ENCODE measurements at regions of chr6 and their contacts with region 1.

Region 1: GRCh38 chr6:166106076-166106686 is 61.5 kb downstream of the TBXT start:
- DNase-seq: peak; percentile 86
- H3K4me3 Mint-ChIP-seq: no peak overlapping the region
- H3K27ac Mint-ChIP-seq: no peak overlapping the region
- H3K4me1 Mint-ChIP-seq: peaks cover 2% of the 10 kb centered on the region
- H3K27me3 Mint-ChIP-seq: peaks cover 9% of the 10 kb centered on the region

Region 2: DNA sequence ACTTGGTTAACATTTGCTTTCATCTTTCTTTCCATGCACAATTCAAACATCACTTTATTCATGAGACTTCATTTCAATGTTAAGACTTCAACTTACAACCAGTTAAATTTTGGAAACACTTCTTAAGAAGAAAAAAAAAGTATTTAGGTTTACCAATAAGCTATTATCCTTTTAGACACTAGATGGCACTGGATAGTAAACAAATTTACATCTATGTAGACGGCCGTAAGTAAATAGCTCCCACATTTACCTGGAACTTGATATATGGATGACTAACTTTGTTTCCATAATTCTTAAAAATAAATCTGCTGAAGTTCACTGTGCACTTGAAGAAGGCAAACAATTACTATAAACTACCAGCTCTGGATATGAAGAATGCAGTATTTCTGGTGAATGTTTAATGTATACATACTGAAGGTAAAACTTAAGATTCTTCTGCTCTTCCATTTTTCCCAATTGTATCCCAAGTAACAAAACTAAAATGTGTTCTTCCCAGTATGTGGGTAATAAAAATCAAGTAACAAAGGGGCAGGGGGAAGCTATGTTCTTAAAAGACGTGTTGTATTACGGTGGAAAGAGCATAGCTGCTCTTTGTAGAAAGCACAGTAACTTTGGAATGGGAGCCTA is 666.1 kb before region 1 on chr6:
- CTCF ChIA-PET with region 1: no interaction called
- intact Hi-C with region 1: loop called (anchors 10 kb)
- DNase-seq: no peak
- H3K4me3 Mint-ChIP-seq: no peak overlapping the region
- H3K27ac Mint-ChIP-seq: no peak overlapping the region
- H3K4me1 Mint-ChIP-seq: no peaks in the 10 kb centered on the region
- H3K27me3 Mint-ChIP-seq: no peaks in the 10 kb centered on the region

Region 3: DNA sequence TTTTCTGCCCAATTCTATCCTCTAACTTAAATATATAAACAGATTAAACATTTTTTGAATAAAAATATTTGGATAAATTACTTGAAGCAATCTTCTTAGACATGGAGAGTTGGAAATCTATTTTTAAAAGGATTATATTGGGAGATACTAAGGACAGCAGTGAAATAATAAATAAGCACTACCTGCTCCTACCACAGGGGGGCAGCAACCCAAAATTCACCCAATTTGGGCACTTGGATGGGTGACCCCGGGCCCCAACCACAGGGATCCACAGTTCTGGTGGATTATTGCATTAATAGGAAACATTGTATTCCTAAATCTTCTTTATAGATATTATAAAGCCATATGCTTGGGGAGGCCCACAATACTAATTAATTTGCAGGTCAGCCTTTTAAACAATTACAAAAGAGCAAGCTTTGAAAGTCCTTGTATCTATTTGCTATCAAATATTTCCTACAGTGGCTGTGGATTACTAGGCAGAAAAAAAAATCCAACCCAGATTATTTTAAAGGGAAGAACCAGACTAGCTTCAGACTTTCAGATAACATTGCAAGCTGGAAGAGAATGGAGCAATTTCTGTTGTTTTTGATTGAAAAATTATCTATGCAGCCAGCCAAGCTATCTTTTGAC is 376.8 kb before region 1 on chr6:
- CTCF ChIA-PET with region 1: interaction called, 7 read pairs
- intact Hi-C with region 1: loop called (anchors 1 kb)
- DNase-seq: peak; percentile 54
- H3K4me3 Mint-ChIP-seq: no peak overlapping the region
- H3K27ac Mint-ChIP-seq: no peak overlapping the region
- H3K4me1 Mint-ChIP-seq: no peaks in the 10 kb centered on the region
- H3K27me3 Mint-ChIP-seq: peaks cover 2% of the 10 kb centered on the region

Region 4: DNA sequence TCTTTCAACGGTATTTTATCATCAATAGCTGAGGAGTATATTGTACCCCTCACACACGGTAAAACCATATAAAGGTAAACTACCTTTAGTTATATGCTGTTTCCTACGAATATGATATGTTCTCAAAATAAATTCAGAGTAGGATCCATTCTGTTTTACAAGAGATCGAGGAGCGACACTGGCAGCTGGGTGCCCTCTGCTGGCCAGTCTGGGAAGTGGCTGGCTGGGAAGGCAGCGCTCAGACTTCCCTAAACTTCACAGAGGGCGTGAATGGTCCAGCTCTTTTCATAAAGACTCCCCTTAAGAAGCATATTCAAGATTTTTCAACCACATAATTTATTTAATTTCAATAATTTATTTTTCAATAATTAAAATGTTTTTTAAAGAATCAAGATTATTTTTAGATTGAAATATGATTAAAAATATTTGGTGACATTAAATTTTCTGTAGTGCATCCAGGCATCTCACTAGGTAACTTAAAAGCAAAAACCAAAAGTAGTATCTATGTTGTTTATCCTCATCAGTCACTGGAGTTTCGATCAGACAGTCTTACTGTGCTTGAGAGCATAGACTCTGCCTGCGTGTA is 255.7 kb before region 1 on chr6:
- CTCF ChIA-PET with region 1: no interaction called
- intact Hi-C with region 1: loop called (anchors 1 kb)
- DNase-seq: peak; percentile 73
- H3K4me3 Mint-ChIP-seq: no peak overlapping the region
- H3K27ac Mint-ChIP-seq: no peak overlapping the region
- H3K4me1 Mint-ChIP-seq: peaks cover 12% of the 10 kb centered on the region
- H3K27me3 Mint-ChIP-seq: peaks cover 62% of the 10 kb centered on the region

Region 5: DNA sequence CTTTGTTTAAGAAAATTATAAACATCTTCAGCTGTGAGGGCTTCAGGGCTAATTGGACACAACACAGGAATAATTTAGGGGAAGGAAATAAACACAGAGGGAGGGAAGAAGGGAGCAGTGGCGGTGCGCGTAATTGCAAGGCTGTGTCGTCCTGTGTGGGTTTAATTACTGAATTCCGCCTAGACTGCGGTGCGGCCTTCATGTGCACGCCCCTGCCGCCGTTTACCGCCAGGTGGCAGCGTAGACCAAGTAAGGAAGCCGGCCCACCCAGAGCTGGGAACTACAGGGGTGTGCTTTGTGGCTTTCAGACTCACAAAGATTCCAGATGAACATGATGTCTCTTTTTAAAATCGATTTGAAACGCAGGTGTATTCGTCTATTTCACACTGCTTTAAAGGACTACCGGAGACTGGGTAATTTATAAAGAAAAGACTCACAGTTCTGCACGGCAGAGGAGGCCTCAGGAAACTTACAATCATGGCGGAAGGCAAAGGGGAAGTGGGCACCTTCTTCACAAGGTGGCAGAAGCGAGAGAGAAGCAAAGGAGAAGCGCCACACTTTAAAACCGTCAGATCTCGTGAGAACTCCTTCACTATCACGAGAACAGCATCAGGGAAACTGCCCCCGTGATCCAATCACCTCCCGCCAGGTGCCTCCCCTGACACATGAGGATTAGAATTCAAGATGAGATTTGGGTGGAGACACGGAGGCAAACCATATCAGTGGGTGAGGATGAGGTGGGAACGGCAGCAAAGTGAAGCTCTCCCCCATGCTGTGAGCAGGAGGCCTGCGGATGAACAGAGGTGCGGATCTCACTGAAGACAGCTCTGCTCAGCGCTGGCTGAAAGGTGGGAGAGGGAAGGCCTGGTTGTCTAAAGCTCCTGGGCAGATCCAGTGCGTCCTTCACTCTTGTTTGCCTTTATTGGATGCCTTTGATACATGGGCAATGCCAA is 221.1 kb before region 1 on chr6:
- CTCF ChIA-PET with region 1: interaction called, 29 read pairs
- intact Hi-C with region 1: loop called (anchors 1 kb)
- DNase-seq: peak; percentile 77
- H3K4me3 Mint-ChIP-seq: no peak overlapping the region
- H3K27ac Mint-ChIP-seq: no peak overlapping the region
- H3K4me1 Mint-ChIP-seq: peaks cover 4% of the 10 kb centered on the region
- H3K27me3 Mint-ChIP-seq: peaks cover 9% of the 10 kb centered on the region

Region 6: GRCh38 chr6:166031275-166031674 is 74.9 kb before region 1 on chr6:
- CTCF ChIA-PET with region 1: interaction called, 3 read pairs
- intact Hi-C with region 1: loop called (anchors 2 kb)
- DNase-seq: no peak
- H3K4me3 Mint-ChIP-seq: no peak overlapping the region
- H3K27ac Mint-ChIP-seq: no peak overlapping the region
- H3K4me1 Mint-ChIP-seq: no peaks in the 10 kb centered on the region
- H3K27me3 Mint-ChIP-seq: no peaks in the 10 kb centered on the region

Region 7: DNA sequence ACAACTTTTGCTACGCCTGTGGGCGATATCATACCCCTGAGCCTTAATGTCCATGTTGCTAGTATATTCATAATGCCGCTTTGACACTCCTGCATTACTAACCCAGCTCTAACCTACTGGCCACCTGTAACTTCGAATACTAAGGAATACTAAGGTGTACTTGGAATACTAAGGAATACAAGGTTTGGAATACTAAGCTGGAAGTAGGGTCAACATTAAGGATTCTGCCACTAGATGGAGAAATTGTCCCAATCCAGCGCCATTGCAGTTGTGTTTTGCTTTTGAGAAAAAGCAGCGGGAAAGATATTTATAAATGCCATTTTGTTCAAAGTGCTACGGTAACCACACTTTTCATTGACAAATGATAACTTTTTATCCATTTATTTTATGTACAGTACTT is 50.8 kb after region 1 on chr6:
- CTCF ChIA-PET with region 1: no interaction called
- intact Hi-C with region 1: no loop called
- DNase-seq: no peak
- H3K4me3 Mint-ChIP-seq: no peak overlapping the region
- H3K27ac Mint-ChIP-seq: no peak overlapping the region
- H3K4me1 Mint-ChIP-seq: no peaks in the 10 kb centered on the region
- H3K27me3 Mint-ChIP-seq: peaks cover 3% of the 10 kb centered on the region

Region 8: DNA sequence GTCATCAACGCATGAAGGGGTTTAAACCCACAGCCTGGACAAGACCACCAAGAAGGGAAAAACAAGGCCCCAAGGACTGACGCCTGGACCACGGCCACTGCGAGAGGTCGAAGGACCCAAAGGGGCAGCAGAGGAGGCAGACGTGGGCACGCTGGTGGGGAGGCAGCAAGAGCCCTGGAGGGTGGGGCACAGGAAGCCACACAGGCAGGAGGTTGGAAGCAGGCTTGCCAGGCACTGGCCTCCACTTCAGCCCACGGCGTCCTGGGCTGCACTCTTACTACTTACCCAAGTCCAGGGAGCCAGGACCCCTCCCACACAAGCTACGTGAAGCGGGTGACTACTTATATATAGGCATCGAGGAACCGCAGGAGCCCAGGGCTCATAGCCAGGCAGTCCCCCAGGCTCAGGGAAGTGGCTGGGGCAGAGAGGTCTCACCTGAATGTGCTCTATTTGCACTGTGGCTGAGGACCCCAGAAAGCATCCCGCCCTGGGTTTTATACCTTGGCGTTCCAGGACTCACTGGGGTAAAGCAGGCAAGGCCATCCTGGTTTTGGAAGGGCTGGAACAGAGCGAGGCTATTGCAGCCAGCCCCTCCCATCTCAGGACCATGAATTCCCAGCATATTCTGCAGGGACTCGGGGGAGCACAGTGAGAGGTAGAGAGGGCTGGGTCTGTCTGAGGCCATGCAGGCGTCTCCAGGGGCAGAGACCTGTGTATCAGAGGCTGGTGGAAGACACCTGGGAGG is 1606.7 kb after region 1 on chr6:
- CTCF ChIA-PET with region 1: no interaction called
- intact Hi-C with region 1: no loop called
- DNase-seq: no peak
- H3K4me3 Mint-ChIP-seq: no peak overlapping the region
- H3K27ac Mint-ChIP-seq: no peak overlapping the region
- H3K4me1 Mint-ChIP-seq: peaks cover 8% of the 10 kb centered on the region
- H3K27me3 Mint-ChIP-seq: peaks cover 72% of the 10 kb centered on the region